MCF 10A (cell line): ENCODE measurements at regions of chr5 and their contacts with region 1.

Region 1: GRCh38 chr5:59188419-59189225 is 605.7 kb downstream of the RAB3C start:
- DNase-seq: peak; percentile 74
- H3K4me3 Mint-ChIP-seq: no peak overlapping the region
- H3K27ac Mint-ChIP-seq: no peak overlapping the region
- H3K4me1 Mint-ChIP-seq: peaks cover 18% of the 10 kb centered on the region
- H3K27me3 Mint-ChIP-seq: no peaks in the 10 kb centered on the region
- CTCF ChIP-seq: peak; percentile 57

Region 2: DNA sequence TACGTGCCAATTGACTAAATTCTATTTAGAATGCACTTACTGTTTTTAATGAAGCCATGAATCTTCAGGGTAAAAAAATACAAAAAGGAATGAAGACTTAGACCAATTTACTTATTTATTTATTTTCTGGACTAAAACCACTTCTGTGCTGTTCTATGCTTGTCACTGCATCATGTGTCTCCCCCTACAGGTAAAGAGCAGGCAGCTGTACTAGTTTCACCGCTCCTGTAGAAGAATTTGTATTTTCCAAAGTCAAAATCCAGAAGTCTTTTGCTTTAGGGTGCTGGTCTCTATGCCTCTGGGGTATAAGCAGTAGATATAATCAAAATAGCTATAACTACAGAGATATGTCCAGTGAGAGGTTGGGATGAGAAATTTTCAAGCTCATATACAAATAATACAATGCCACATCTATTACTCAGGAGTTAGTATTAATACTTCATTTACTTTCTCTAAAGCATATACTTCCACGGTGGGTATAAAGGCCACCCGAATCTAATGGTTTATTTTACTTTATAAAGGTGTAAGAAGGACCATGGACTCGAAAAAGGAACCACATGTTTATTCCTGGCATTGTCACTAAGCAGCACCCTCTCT is 14.3 kb before region 1 on chr5:
- CTCF ChIA-PET with region 1: interaction called, 36 read pairs
- POLR2A ChIA-PET with region 1: interaction called, 6 read pairs
- intact Hi-C with region 1: no loop called
- DNase-seq: peak; percentile 73
- H3K4me3 Mint-ChIP-seq: no peak overlapping the region
- H3K27ac Mint-ChIP-seq: no peak overlapping the region
- H3K4me1 Mint-ChIP-seq: peaks cover 7% of the 10 kb centered on the region
- H3K27me3 Mint-ChIP-seq: no peaks in the 10 kb centered on the region
- CTCF ChIP-seq: peak; percentile 89

Region 3: GRCh38 chr5:59218424-59219045 is 29.9 kb after region 1 on chr5:
- CTCF ChIA-PET with region 1: interaction called, 27 read pairs
- POLR2A ChIA-PET with region 1: interaction called, 3 read pairs
- intact Hi-C with region 1: no loop called
- DNase-seq: peak; percentile 11
- H3K4me3 Mint-ChIP-seq: no peak overlapping the region
- H3K27ac Mint-ChIP-seq: no peak overlapping the region
- H3K4me1 Mint-ChIP-seq: peaks cover 22% of the 10 kb centered on the region
- H3K27me3 Mint-ChIP-seq: no peaks in the 10 kb centered on the region
- CTCF ChIP-seq: peak; percentile 39

Region 4: GRCh38 chr5:59358005-59358861 is 169.6 kb after region 1 on chr5:
- CTCF ChIA-PET with region 1: interaction called, 359 read pairs
- POLR2A ChIA-PET with region 1: interaction called, 4 read pairs
- intact Hi-C with region 1: no loop called
- DNase-seq: no peak
- H3K4me3 Mint-ChIP-seq: no peak overlapping the region
- H3K27ac Mint-ChIP-seq: no peak overlapping the region
- H3K4me1 Mint-ChIP-seq: no peaks in the 10 kb centered on the region
- H3K27me3 Mint-ChIP-seq: no peaks in the 10 kb centered on the region
- CTCF ChIP-seq: no peak

Region 5: DNA sequence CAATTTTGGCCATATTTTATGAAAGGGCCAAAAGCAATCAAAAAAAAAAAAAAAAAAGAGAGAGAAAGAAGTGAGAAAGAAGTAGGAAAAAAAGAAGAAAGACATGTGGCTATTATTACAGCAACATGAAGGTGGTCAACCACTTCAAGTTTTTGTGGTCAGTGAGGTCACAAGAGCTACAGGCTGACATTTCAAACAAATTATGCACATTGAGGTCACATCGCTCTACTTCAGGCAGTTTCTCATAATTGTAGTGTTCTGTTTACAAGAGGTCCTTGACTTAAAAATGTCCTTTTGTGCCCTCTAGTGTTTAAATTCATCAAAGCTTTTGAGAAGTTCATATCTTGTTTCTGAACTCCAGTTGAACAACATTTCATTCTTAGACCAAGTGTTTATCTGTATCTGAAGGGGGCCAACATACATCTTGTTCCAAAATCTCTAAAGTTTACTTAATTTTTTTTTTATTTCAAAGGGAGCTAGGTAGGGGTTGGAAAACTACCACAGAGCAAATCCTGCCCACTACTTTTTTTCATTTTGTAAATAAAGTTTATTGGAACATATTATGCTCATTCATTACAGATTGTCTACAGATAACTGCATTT is 191.8 kb after region 1 on chr5:
- CTCF ChIA-PET with region 1: interaction called, 359 read pairs
- POLR2A ChIA-PET with region 1: interaction called, 7 read pairs
- intact Hi-C with region 1: loop called (anchors 1 kb)
- DNase-seq: peak; percentile 65
- H3K4me3 Mint-ChIP-seq: no peak overlapping the region
- H3K27ac Mint-ChIP-seq: no peak overlapping the region
- H3K4me1 Mint-ChIP-seq: peaks cover 6% of the 10 kb centered on the region
- H3K27me3 Mint-ChIP-seq: no peaks in the 10 kb centered on the region
- CTCF ChIP-seq: peak; percentile 38

Region 6: DNA sequence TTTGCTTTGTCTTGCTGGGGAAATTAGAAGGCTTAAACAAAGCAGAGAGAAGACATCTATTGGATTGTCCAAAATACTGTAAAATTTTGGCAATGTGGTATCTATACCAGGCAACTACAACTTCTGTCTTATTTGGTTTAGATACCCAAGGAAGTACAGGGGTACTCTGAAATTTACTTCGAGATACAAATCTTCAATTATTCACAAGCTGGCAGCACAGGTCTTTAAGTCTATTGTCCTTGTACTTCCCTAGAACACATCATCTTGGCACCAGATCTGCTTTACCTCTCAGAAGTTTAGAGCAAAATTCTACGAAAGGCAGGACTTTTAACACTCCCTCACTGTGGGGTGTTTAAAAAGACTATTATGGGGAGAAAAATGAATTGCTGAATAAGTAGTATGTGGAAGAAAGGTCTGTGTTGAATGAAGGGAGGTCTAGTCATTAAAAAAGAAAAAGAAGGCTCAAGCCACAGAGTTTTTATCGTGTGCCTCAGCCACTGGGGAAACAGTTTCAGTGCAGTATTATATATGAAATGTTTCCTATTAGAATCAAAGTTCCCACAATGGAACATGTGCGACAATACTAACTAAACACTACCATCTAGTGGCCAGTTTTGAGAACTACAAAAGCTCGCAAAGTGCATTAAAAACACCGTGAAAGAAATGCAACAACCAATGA is 611.2 kb after region 1 on chr5:
- CTCF ChIA-PET with region 1: interaction called, 3 read pairs
- POLR2A ChIA-PET with region 1: no interaction called
- intact Hi-C with region 1: loop called (anchors 1 kb)
- DNase-seq: peak; percentile 77
- H3K4me3 Mint-ChIP-seq: no peak overlapping the region
- H3K27ac Mint-ChIP-seq: no peak overlapping the region
- H3K4me1 Mint-ChIP-seq: no peaks in the 10 kb centered on the region
- H3K27me3 Mint-ChIP-seq: no peaks in the 10 kb centered on the region
- CTCF ChIP-seq: peak; percentile 67

Region 7: DNA sequence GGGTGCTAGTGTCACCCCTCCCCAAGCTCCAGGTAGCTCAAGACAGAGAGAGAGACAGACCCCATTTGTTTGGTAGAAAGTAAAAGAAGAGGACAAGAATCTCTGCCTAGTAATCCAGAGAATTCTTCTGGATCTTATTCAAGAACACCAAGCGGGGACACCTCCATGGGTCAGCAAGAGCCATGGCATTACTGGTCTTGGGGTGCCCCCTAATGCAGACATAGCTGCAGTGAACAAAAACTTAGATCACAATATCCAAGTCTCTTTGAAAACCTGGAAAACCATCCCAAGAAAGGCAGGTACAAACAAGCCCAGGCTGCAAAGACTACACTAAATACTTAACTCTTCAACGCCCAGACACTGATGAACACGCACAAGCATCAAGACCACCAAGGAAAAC is 734.8 kb after region 1 on chr5:
- CTCF ChIA-PET with region 1: no interaction called
- POLR2A ChIA-PET with region 1: no interaction called
- intact Hi-C with region 1: no loop called
- DNase-seq: no peak
- H3K4me3 Mint-ChIP-seq: no peak overlapping the region
- H3K27ac Mint-ChIP-seq: no peak overlapping the region
- H3K4me1 Mint-ChIP-seq: no peaks in the 10 kb centered on the region
- H3K27me3 Mint-ChIP-seq: peaks cover 91% of the 10 kb centered on the region
- CTCF ChIP-seq: no peak